Endothelial cell of umbilical vein (primary cell): ENCODE measurements at regions of chr2 and their contacts with region 1.

Region 1: DNA sequence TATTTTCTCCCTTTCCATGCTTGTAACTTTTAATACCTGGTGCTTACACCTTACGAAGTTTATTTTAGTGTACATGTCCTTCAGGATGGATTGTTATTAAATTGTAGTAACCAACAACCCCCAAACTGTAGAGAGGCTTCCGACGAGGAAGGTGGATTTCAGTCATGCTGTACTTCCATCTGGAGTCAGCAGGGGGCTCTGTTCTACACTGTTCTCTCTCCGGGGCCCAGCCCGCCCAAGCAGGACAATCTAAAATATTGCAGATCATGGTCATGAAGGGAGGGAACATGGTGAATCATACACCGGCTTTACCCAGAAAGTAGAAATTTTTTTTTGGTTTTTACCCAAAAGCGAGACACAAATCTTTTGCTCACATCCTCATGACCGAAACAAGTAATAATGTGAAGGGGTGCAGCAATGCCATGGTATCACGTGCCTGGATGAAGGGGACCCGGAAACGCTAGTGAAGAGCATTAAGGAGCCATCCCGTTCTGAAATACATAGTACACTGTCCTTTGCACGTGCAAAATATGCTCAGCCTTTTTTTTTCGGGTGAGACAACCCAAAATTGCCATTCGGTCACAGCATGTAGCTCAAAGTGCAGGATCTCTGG is 884.8 kb downstream of the EPHA4 start:
- DNase-seq: peak; percentile 52
- H3K4me3 ChIP-seq: no peak overlapping the region
- H3K27ac ChIP-seq: no peak overlapping the region
- H3K4me1 ChIP-seq: no peaks in the 10 kb centered on the region
- H3K27me3 ChIP-seq: no peaks in the 10 kb centered on the region
- CTCF ChIP-seq: peak; percentile 71 to 73
- POLR2A ChIP-seq: no peak

Region 2: DNA sequence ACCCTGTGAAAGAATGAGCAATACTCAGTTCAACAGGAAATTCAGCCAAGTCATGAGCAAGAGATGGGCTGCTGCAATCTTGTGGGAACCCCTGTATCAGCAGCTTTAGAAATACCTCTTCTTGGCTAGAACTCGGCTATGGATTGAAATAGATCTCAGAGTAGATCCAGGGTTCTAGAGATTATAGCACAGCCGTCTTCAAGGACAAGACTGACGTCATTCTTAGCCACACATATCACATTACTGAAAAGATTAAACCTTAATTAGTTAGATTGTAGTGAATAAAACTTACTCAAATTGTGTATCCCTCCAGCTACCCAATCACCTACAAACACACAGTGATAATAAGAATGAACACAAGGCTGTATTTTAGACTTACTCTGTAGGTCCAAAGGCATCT is 108.4 kb after region 1 on chr2:
- CTCF ChIA-PET with region 1: no interaction called
- POLR2A ChIA-PET with region 1: no interaction called
- dilution Hi-C with region 1: no loop called
- intact Hi-C with region 1: no loop called
- DNase-seq: no peak
- H3K4me3 ChIP-seq: no peak overlapping the region
- H3K27ac ChIP-seq: no peak overlapping the region
- H3K4me1 ChIP-seq: no peaks in the 10 kb centered on the region
- H3K27me3 ChIP-seq: no peaks in the 10 kb centered on the region
- CTCF ChIP-seq: no peak
- POLR2A ChIP-seq: no peak

Region 3: GRCh38 chr2:221104361-221104811 is 417.0 kb after region 1 on chr2:
- CTCF ChIA-PET with region 1: no interaction called
- POLR2A ChIA-PET with region 1: no interaction called
- dilution Hi-C with region 1: no loop called
- intact Hi-C with region 1: loop called (anchors 1 kb)
- DNase-seq: peak; percentile 69
- H3K4me3 ChIP-seq: no peak overlapping the region
- H3K27ac ChIP-seq: no peak overlapping the region
- H3K4me1 ChIP-seq: peaks cover 11% of the 10 kb centered on the region
- H3K27me3 ChIP-seq: no peaks in the 10 kb centered on the region
- CTCF ChIP-seq: peak in 1 of 2 donors; percentile 26
- POLR2A ChIP-seq: no peak

Region 4: GRCh38 chr2:221372159-221372884 is 685.0 kb after region 1 on chr2:
- CTCF ChIA-PET with region 1: no interaction called
- POLR2A ChIA-PET with region 1: no interaction called
- dilution Hi-C with region 1: no loop called
- intact Hi-C with region 1: loop called (anchors 10 kb)
- DNase-seq: peak; percentile 10
- H3K4me3 ChIP-seq: no peak overlapping the region
- H3K27ac ChIP-seq: no peak overlapping the region
- H3K4me1 ChIP-seq: no peaks in the 10 kb centered on the region
- H3K27me3 ChIP-seq: peaks cover 0 to 2% of the 10 kb centered on the region in 2 experiments
- CTCF ChIP-seq: peak in 1 of 2 donors; percentile 22
- POLR2A ChIP-seq: no peak

Region 5: GRCh38 chr2:221724631-221725203 is 1037.4 kb after region 1 on chr2:
- CTCF ChIA-PET with region 1: no interaction called
- POLR2A ChIA-PET with region 1: no interaction called
- dilution Hi-C with region 1: no loop called
- intact Hi-C with region 1: loop called (anchors 10 kb)
- DNase-seq: no peak
- H3K4me3 ChIP-seq: no peak overlapping the region
- H3K27ac ChIP-seq: no peak overlapping the region
- H3K4me1 ChIP-seq: no peaks in the 10 kb centered on the region
- H3K27me3 ChIP-seq: no peaks in the 10 kb centered on the region
- CTCF ChIP-seq: no peak
- POLR2A ChIP-seq: no peak